ENCODE measurements at regions of chr10 and their contacts with region 1.

Region 1: GRCh38 chr10:44878706-44879530 is 32.2 kb upstream of the TMEM72 start:
- DNase-seq: peak; percentile 86
- H3K4me3 ChIP-seq: peak overlapping the region; percentile 40 to 61
- H3K27ac ChIP-seq: no peak overlapping the region
- H3K4me1 ChIP-seq: peaks cover 0 to 10% of the 10 kb centered on the region in 2 experiments; a peak in 1 of 4 replicates
- H3K27me3 ChIP-seq: peaks cover 32% of the 10 kb centered on the region
- CTCF ChIP-seq: no peak
- EP300 ChIP-seq: no peak
- RAD21 ChIP-seq: no peak

Region 2: GRCh38 chr10:44864637-44865288 is 14.2 kb before region 1 on chr10:
- CTCF ChIA-PET with region 1: interaction called, 32 read pairs
- POLR2A ChIA-PET with region 1: no interaction called
- DNase-seq: peak; percentile 91
- H3K4me3 ChIP-seq: peak overlapping the region; percentile 53 to 65
- H3K27ac ChIP-seq: peak overlapping the region in 1 of 2 experiments; percentile 34; a peak in 2 of 4 replicates
- H3K4me1 ChIP-seq: peaks cover 12 to 19% of the 10 kb centered on the region in 2 experiments; a peak in 3 of 4 replicates
- H3K27me3 ChIP-seq: peaks cover 21% of the 10 kb centered on the region; the same call in 1 of the 2 replicates
- CTCF ChIP-seq: peak; percentile 95
- EP300 ChIP-seq: no peak
- RAD21 ChIP-seq: peak; percentile 73

Region 3: DNA sequence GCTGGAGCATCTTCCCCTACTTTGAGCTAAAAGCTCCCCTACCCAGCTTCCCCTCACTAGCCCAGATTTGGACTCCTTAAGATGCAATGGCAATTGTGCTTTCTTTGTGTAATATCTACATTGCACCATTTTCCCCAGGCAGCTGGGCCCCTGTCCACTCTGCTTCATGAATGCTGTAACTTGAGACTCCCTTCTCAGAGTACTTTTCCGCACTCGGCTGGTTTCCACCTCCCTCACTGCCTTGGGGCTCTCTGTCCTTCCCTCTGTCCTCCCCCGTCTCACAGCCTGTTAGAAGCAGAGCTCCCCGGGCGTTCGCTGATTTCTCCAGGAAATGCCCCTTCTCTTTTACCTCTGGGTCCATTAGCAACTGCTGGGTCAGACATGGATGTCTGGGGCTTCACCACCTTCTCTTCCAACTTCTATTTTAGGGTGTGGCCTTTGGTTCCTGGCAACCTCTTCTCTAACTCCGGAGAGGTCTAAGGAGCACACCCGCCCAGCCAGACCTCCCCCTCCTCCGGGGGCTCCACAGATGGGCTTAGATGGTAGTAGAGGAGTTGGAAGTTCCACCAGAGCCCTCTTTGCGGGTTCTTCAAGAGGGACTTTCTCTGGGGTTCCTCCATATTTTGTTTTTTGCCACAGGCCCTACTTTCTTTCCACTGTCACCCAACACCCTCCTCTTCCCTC is 29.3 kb after region 1 on chr10:
- CTCF ChIA-PET with region 1: no interaction called
- POLR2A ChIA-PET with region 1: no interaction called
- DNase-seq: no peak
- H3K4me3 ChIP-seq: no peak overlapping the region
- H3K27ac ChIP-seq: no peak overlapping the region
- H3K4me1 ChIP-seq: peaks cover 0 to 6% of the 10 kb centered on the region in 2 experiments; a peak in 1 of 4 replicates
- H3K27me3 ChIP-seq: peaks cover 88% of the 10 kb centered on the region
- CTCF ChIP-seq: no peak
- EP300 ChIP-seq: no peak
- RAD21 ChIP-seq: no peak

Region 4: DNA sequence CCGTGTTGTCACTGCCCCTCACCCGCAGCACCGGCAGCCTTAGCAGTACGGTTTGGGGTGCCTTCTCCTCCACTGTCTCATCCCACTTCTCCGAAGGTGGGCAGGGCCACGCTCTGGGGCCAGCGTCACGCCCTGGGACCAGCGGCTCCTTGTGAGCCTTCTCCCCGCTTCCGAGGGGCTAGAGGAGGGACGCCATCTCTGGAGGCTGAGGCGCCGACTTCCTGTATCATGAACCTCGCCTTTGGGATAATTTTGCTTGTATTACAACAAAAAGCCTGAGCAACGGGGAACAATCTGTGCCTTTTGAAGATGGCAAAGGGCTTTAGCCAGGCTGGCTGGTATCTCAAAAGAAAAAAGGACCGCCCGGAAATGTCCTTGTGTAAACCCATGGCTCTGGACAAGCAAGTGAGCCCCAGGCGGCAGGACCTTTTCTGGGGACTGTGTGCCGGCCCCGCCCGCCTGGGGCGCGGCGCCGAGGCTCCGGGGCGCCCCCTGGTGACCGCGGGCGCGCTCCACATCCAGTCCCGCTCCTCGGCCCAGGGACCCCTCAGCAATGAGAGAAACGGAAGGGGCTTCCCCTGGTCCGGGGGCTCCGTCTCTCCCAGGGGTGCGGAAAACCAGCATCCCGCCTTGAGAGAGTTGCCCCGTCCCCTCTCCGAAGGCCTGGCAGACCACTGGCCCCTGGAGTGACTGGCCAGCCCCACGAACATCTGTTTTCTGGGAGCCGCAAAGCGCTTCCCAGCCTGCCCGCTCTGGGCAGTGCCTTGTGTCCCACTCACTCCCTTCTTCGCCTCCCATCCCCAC is 95.9 kb after region 1 on chr10:
- CTCF ChIA-PET with region 1: no interaction called
- POLR2A ChIA-PET with region 1: no interaction called
- DNase-seq: peak; percentile 94
- H3K4me3 ChIP-seq: peak overlapping the region; percentile 29 to 45
- H3K27ac ChIP-seq: peak overlapping the region; percentile 24 to 44; a peak in 1 of 4 replicates
- H3K4me1 ChIP-seq: peaks cover 35 to 45% of the 10 kb centered on the region in 2 experiments; a peak in 3 of 4 replicates
- H3K27me3 ChIP-seq: no peaks in the 10 kb centered on the region
- CTCF ChIP-seq: peak; percentile 94
- EP300 ChIP-seq: no peak
- RAD21 ChIP-seq: peak; percentile 67